Activated CD8-positive, alpha-beta memory T cell treated with anti-CD3 and anti-CD28 coated beads, Interleukin-2, amount 10 ng/mL, durations not matched to agents 7 days and 5 days (primary cell): ENCODE measurements at regions of chr1 and their contacts with region 1.

Region 1: DNA sequence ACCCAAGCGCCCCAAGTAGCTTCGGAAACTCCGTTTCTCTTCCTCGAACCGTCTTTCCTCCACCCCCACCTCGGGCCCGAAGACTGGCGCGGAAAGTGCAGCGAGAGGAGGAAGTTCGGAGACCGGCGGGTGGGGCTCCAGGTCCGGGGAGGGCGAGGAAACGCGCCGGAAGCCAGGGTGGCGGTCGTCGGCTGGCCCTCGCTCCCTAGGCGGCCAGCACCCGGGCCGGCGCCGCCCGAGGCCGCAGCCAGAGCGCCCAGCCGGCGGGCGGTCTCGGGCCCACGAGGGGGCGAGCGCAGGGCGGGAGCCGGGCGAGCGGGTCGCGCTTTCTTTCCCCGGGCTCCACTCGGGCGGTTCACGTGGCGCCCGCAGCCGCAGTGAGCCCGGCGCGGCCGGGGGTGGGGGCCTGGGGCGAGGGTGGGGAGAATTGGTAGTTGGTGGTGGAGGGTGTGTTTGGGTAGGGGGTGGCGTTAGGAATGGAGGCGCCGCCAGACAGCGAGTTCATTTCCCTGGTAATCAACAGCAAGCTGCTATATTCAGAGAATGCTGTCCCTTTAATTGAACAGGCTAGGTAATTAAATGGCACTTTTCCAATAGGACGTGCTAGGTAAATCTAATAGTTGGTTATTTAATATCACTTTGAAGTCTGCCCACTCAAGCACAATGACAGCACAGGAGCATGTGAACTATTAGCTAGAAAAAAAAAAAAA is 6.7 kb downstream of the LMO4 start:
- DNase-seq: peak; percentile 86
- ATAC-seq: peak; percentile 61
- H3K4me3 Mint-ChIP-seq: peak overlapping the region; percentile 89
- H3K27ac Mint-ChIP-seq: peak overlapping the region; percentile 92
- H3K4me1 Mint-ChIP-seq: peaks cover 50% of the 10 kb centered on the region
- H3K27me3 Mint-ChIP-seq: no peaks in the 10 kb centered on the region

Region 2: GRCh38 chr1:87348341-87348999 is 13.1 kb after region 1 on chr1:
- CTCF ChIA-PET with region 1: interaction called, 19 read pairs
- DNase-seq: no peak
- ATAC-seq: no peak
- H3K4me3 Mint-ChIP-seq: no peak overlapping the region
- H3K27ac Mint-ChIP-seq: no peak overlapping the region
- H3K4me1 Mint-ChIP-seq: no peaks in the 10 kb centered on the region
- H3K27me3 Mint-ChIP-seq: no peaks in the 10 kb centered on the region